ENCODE measurements at regions of chr12 and their contacts with region 1.

Region 1: GRCh38 chr12:91704446-91704845 is 441.2 kb downstream of the BTG1 start:
- DNase-seq: no peak
- ATAC-seq: no peak
- H3K4me3 ChIP-seq: no peak overlapping the region
- H3K27ac ChIP-seq: no peak overlapping the region
- H3K4me1 ChIP-seq: no peaks in the 10 kb centered on the region
- H3K27me3 ChIP-seq: no peaks in the 10 kb centered on the region
- CTCF ChIP-seq: no peak
- EP300 ChIP-seq: no peak
- POLR2A ChIP-seq: no peak
- RAD21 ChIP-seq: no peak

Region 2: DNA sequence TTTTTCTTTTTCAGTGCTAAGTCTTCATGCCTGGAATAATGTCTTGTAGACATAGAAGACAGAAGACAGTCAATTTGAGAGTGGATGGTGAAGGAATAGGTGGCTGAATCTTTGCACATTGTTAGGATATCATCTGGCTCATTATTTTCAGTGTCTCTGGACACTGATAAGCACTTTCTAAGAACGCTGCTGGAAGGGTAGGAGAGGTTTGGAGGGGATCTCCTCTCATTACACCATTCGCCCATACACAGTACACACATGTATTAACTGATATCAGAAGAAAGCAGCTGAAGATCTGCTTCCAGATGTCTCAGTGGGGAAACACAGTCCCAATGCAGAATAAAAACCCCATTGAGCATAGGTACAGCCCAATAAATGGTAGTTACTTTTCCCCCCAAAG is 60.7 kb before region 1 on chr12:
- CTCF ChIA-PET with region 1: no interaction called
- POLR2A ChIA-PET with region 1: no interaction called
- in situ Hi-C with region 1: no loop called
- intact Hi-C with region 1: no loop called
- DNase-seq: peak in 1 of 4 experiments; percentile 36
- ATAC-seq: peak; percentile 62
- H3K4me3 ChIP-seq: no peak overlapping the region
- H3K27ac ChIP-seq: no peak overlapping the region
- H3K4me1 ChIP-seq: peaks cover 0 to 4% of the 10 kb centered on the region in 2 experiments; a peak in 2 of 5 replicates
- H3K27me3 ChIP-seq: no peaks in the 10 kb centered on the region
- CTCF ChIP-seq: no peak
- EP300 ChIP-seq: no peak
- POLR2A ChIP-seq: no peak
- RAD21 ChIP-seq: no peak

Region 3: DNA sequence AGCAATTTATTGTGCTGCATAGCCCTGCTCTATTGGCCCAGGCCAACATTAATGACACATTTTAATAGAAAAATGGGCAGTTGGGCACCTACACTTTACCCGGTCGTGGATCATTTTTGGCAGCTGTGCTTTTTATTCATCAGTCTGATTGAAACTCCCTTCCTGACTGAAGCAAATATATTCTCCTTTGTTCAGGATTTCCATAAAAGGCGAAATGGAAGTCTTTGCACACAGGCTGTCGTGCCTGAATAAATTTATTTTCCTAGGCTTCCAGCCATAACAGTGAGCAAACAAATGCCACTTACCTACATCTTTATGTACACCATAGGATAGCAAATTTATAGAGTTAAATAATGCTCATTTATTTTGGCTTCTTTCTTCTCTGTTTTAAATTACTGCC is 41.1 kb before region 1 on chr12:
- CTCF ChIA-PET with region 1: no interaction called
- POLR2A ChIA-PET with region 1: no interaction called
- in situ Hi-C with region 1: no loop called
- intact Hi-C with region 1: no loop called
- DNase-seq: no peak
- ATAC-seq: no peak
- H3K4me3 ChIP-seq: no peak overlapping the region
- H3K27ac ChIP-seq: no peak overlapping the region
- H3K4me1 ChIP-seq: no peaks in the 10 kb centered on the region
- H3K27me3 ChIP-seq: no peaks in the 10 kb centered on the region
- CTCF ChIP-seq: no peak
- EP300 ChIP-seq: no peak
- POLR2A ChIP-seq: no peak
- RAD21 ChIP-seq: no peak

Region 4: DNA sequence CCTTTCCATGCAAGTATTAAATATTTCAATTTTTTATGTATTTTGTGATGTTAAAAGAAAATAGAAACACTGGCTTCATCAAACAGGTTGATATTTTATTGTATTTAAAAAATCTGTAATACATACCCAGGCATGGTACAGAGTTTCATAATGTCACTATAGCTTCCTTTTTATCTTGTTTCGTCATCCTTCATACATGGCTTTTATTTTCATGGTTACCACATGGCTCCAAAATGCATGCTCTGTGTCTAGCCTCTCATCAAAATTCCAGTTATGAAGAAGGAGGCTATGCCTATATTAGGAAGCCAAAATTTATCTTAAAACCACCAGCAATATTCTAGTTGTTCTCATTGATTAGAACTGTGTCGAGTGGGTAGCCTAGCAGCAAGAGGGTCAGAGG is 23.6 kb before region 1 on chr12:
- CTCF ChIA-PET with region 1: no interaction called
- POLR2A ChIA-PET with region 1: interaction called, 10 read pairs
- in situ Hi-C with region 1: no loop called
- intact Hi-C with region 1: no loop called
- DNase-seq: peak in 1 of 4 experiments; percentile 25
- ATAC-seq: peak; percentile 68
- H3K4me3 ChIP-seq: peak overlapping the region; percentile 49
- H3K27ac ChIP-seq: peak overlapping the region; percentile 83
- H3K4me1 ChIP-seq: peaks cover 0 to 8% of the 10 kb centered on the region in 2 experiments; a peak in 2 of 5 replicates
- H3K27me3 ChIP-seq: no peaks in the 10 kb centered on the region
- CTCF ChIP-seq: no peak
- EP300 ChIP-seq: no peak
- POLR2A ChIP-seq: no peak
- RAD21 ChIP-seq: no peak

Region 5: GRCh38 chr12:91722072-91722471 is 17.6 kb after region 1 on chr12:
- CTCF ChIA-PET with region 1: no interaction called
- POLR2A ChIA-PET with region 1: no interaction called
- in situ Hi-C with region 1: no loop called
- intact Hi-C with region 1: no loop called
- DNase-seq: no peak
- ATAC-seq: no peak
- H3K4me3 ChIP-seq: no peak overlapping the region
- H3K27ac ChIP-seq: no peak overlapping the region
- H3K4me1 ChIP-seq: no peaks in the 10 kb centered on the region
- H3K27me3 ChIP-seq: no peaks in the 10 kb centered on the region
- CTCF ChIP-seq: no peak
- EP300 ChIP-seq: no peak
- POLR2A ChIP-seq: no peak
- RAD21 ChIP-seq: no peak

Region 6: DNA sequence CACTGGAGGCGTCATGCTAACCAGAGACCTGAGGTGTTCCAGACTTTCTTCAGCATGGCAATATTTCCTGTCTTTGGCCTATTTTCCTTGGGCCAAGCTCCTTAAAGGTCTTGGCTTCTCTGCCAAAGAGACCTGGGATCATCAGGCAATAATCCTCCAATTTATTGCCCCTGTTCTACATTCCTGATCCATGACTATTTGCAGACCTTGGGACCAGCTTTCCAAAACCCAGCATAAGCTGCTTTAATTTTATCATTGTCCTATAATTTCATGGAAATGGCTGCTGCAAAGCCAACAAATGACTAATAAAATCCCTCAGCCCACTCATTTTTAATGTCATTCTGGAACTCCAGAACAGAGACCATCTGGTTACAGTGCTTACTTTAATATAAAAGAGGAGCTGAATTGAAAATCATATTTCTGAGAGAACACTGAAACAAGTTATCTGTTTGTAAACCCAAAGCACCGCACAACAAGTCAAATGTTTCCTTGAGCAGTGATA is 608.1 kb after region 1 on chr12:
- CTCF ChIA-PET with region 1: no interaction called
- POLR2A ChIA-PET with region 1: no interaction called
- in situ Hi-C with region 1: no loop called
- intact Hi-C with region 1: no loop called
- DNase-seq: no peak
- ATAC-seq: no peak
- H3K4me3 ChIP-seq: no peak overlapping the region
- H3K27ac ChIP-seq: no peak overlapping the region
- H3K4me1 ChIP-seq: no peaks in the 10 kb centered on the region
- H3K27me3 ChIP-seq: no peaks in the 10 kb centered on the region
- CTCF ChIP-seq: no peak
- EP300 ChIP-seq: no peak
- POLR2A ChIP-seq: no peak
- RAD21 ChIP-seq: no peak

Measured in K562 (cell line).